ENCODE measurements at regions of chrX and their contacts with region 1.

Region 1: DNA sequence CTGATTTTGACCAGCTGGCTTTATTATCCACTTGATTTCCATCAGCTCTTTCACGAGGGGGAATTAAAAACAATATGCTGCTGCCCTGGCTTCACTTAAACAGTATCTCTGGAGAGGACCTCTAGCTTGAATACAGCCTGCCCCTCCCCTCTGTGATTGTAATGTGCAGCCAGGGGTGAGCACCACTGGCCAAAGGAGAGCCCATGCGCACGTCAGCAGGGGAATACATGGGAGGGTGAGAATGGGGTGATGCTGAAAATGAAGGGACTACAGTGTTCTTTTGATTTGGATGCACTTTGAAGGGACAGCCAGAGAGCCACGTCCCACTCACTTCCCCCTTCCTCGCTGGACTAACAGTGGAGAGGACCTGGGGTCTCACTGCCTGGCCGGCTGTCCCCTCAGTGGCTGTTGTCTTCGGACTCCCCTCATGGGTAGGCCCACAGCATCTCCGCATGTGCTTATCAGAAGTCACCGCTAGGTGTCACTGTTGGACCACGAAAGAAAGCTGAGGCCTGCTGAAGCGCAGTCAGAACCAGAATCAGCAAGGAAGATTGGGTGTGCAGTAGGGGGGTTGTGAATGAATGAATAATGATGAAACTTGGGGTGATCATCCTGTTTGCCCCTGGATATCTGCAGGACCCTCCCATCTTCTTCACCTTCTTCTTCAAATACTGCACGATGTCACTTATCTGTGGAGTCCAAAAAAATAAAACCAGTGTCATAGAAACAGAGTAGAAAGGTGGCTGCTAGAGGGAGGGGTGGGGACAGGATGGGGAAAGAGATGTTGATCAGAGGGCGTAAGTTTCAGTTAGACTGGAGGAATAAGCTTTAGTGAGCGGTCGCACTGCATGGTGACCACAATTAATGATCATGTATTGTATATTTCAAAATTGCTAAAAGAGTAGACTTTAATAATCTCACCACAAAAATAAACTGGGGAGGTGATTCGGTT is 32.8 kb downstream of the CLCN4 start:
- ATAC-seq: peak; percentile 74 to 98 (median 96)
- H3K4me3 ChIP-seq: no peak overlapping the region
- H3K27ac ChIP-seq: no peak overlapping the region
- H3K4me1 ChIP-seq: peaks cover 0 to 11% of the 10 kb centered on the region in 2 donors

Region 2: DNA sequence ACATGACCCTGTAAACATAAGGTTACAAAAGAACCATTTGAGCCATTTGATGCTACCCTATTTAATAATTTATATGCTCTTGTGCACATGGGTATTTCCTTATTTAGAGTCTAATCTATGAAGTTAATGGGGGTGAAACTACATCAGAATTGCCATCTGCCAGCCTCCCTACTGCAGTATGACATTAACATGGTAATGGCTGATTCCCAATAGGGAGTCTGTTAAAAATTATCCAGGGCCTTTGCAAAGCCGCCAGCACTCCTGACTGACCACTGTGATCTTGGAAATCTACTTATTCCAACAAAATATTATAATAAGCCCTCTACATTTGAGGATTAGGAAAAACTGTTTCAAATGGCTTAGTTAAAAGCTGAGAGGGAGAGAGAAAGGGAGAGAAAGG is 120.9 kb after region 1 on chrX:
- in situ Hi-C with region 1: loop called in 1 of 9 experiments (anchors 25 kb)
- ATAC-seq: peak in 1 of 8 experiments; percentile 26
- H3K4me3 ChIP-seq: no peak overlapping the region
- H3K27ac ChIP-seq: peak overlapping the region in 1 of 2 donors; percentile 33
- H3K4me1 ChIP-seq: peaks cover 7 to 8% of the 10 kb centered on the region in 2 donors

Region 3: DNA sequence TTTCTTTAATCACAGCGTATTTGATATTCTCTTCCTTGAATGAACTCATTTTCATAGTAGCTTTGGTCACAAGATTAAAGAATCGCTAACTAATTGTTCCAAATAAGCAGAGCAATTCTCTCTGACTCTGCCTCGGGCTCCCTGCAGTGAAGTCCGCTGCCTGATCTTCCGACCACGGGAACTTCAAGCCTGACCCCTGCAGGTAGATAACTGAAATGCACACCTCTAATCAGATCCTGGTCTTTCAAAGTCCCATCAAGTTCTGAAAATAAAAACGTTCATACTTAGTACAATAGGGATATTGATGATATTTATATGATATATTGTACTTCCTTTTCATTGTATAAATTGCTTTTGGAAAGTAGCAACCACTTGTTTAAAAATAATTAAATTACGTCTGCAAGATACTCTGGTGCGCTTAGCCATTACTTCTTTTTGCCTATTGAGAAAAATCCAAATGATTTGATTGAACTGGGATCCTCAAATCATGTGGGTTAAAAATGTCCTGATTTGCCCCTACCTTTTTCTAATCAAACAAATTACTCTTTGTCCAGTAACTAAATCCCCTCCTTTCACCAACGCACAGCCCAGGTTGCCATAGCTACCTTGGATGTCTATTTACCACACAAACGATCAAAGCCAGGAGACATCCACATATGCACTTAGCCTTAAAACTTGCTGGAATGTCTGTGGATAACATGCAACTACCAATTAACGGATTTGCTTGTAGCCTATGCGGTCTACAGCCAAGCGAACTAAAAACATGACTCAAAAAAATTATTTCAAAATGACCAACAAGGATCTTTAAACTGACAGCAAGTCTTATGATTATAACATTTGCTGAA is 426.6 kb after region 1 on chrX:
- in situ Hi-C with region 1: loop called in 3 of 9 experiments (anchors 25 kb)
- ATAC-seq: peak in 5 of 8 experiments; percentile 7 to 34 (median 31)
- H3K4me3 ChIP-seq: peak overlapping the region; percentile 8 to 22 (median 19)
- H3K27ac ChIP-seq: no peak overlapping the region
- H3K4me1 ChIP-seq: peaks cover 26 to 53% of the 10 kb centered on the region in 2 donors

Region 4: GRCh38 chrX:10725071-10725470 is 535.5 kb after region 1 on chrX:
- in situ Hi-C with region 1: loop called in 1 of 9 experiments (anchors 25 kb)
- ATAC-seq: no peak
- H3K4me3 ChIP-seq: no peak overlapping the region
- H3K27ac ChIP-seq: no peak overlapping the region
- H3K4me1 ChIP-seq: peaks cover 4 to 15% of the 10 kb centered on the region in 2 donors

Region 5: DNA sequence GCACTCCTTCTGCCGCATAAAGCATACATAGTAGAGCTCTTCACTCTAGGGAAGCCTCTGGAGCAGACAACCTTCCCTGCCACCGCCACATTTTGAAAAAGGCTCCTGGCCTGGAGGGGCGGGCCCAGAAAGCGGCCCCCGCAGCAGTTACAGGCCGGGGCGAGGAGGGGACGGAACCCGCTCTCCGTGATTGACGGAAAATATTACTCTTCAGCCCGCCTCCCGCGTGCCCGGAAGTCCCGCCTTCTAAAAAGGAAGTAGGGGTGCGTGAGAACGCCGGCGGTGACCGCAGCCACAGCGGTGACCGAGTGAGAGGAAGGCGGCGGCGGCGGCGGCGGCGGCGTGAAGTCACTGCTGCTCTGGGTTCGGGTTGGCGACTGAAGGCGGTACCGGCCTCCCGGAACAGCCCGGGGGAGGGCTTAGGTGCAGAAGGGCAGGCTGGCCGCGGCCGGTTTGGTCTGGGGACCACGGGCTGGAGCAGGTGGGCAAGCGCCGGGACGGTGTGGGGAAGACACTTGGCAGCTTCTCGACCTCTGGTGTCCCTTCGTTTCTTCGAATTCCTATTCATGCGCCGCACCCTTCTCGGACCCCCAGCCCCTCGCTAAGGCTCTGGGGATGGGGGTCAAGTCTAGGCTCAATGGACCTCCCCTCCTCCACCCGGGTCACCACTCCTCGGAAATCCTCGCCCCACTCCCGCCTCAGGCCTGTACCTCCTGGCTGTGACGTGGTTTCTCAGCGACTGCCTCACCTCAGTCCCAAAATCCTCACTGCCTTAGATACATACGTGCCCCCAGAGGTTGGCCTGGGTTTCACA is 921.7 kb after region 1 on chrX and contains the start of gene HCCS:
- in situ Hi-C with region 1: loop called in 3 of 9 experiments (anchors 25 kb)
- ATAC-seq: peak; percentile 90 to 98 (median 96)
- H3K4me3 ChIP-seq: peak within 1 kb of the TSS; percentile 69 to 77 (median 72)
- H3K27ac ChIP-seq: peak within 1 kb of the TSS; percentile 88 to 90
- H3K4me1 ChIP-seq: peaks cover 0 to 5% of the 10 kb centered on the region in 2 donors
- total RNA-seq, gene HCCS: 12.0 to 53.4 (median 18.7) TPM

Region 6: GRCh38 chrX:11143931-11144678 is 954.5 kb after region 1 on chrX:
- in situ Hi-C with region 1: loop called in 4 of 9 experiments (anchors 25 kb)
- ATAC-seq: peak in 7 of 8 experiments; percentile 56 to 95 (median 76)
- H3K4me3 ChIP-seq: no peak overlapping the region
- H3K27ac ChIP-seq: no peak overlapping the region
- H3K4me1 ChIP-seq: no peaks in the 10 kb centered on the region